ENCODE measurements at regions of chr5 and their contacts with region 1.

Region 1: DNA sequence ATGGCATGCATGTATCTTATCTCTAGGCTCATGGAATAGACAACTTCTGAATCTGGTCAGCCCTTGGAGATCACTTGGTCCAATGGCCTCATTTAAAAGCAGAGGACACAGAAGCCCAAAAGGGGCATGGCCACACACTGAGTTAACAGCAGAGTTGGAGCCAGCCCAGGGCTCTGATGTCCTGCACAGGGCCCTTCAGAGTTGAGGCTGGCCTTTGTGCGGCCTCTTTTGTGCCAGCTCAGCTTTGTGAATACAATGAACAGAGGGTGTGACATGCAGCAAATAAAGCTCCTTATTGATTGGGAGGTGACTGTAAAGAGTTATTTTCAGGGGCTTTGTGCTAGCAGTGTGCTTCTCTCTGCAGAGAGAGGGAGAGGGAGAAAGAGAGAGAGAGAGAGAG is 150.1 kb upstream of the STK32A start:
- DNase-seq: no peak
- ATAC-seq: no peak
- H3K4me3 ChIP-seq: no peak overlapping the region
- H3K27ac ChIP-seq: no peak overlapping the region
- H3K4me1 ChIP-seq: no peaks in the 10 kb centered on the region
- H3K27me3 ChIP-seq: no peaks in the 10 kb centered on the region
- CTCF ChIP-seq: no peak
- EP300 ChIP-seq: no peak
- POLR2A ChIP-seq: no peak
- RAD21 ChIP-seq: no peak

Region 2: DNA sequence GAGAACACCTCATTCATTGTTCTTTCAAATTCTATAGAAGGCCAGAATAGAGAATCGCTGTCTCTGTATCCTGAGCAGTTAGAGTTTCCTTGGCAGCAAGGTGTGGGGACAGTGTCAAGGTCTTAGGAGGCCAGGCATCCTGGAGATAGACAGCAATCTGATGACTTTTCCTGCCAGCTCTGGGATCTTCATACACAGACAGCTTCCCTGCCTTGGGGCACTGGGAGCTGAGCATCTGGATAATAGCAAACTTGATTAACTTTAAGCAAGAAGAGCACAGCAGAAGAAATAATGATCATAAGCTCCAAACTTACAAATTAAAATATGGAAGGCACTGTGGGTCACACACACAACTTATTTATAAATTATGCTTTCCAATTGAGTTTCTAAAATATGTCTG is 64.0 kb after region 1 on chr5:
- CTCF ChIA-PET with region 1: no interaction called
- POLR2A ChIA-PET with region 1: no interaction called
- in situ Hi-C with region 1: no loop called
- intact Hi-C with region 1: loop called (anchors 2 kb)
- DNase-seq: no peak
- ATAC-seq: no peak
- H3K4me3 ChIP-seq: no peak overlapping the region
- H3K27ac ChIP-seq: no peak overlapping the region
- H3K4me1 ChIP-seq: no peaks in the 10 kb centered on the region
- H3K27me3 ChIP-seq: no peaks in the 10 kb centered on the region
- CTCF ChIP-seq: no peak
- EP300 ChIP-seq: no peak
- POLR2A ChIP-seq: no peak
- RAD21 ChIP-seq: no peak

Measured in K562 (cell line).